ENCODE measurements at regions of chr2 and their contacts with region 1.

Region 1: DNA sequence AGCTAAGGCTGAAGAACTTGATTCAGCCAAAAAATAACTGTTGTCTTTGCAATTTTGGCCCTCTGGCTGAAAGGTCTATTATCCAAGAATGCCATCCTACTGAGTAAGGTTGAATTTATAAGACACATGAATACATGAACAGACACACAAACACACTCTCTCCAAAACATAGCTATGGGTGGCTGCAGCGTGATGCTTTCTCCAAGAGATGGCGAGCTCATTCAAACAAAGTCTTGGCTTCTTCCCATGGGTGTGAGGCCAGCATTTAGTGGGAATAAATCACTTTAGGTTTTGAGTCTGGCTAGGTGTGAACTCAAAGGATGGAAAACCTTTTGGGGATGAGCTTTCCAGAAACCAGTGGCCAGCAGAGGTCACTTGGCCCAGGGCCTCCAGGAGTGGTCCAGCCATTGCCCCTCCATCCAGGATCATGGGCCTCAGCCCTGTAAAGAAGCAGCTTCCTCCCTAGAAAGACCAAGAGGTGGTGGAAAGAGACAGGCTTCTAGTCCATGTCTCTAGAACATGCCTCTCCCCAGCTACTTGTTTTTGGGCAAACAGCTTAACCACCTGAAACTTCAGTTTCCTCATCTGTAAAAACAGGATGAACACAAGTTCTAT is 11.0 kb upstream of the OSR1 start:
- DNase-seq: peak; percentile 51
- H3K4me3 ChIP-seq: no peak overlapping the region
- H3K27ac ChIP-seq: no peak overlapping the region
- H3K4me1 ChIP-seq: no peaks in the 10 kb centered on the region
- H3K27me3 ChIP-seq: no peaks in the 10 kb centered on the region
- CTCF ChIP-seq: peak; percentile 82 to 84

Region 2: GRCh38 chr2:19380532-19380931 is 11.1 kb after region 1 on chr2:
- CTCF ChIA-PET with region 1: no interaction called
- dilution Hi-C with region 1: no loop called
- in situ Hi-C with region 1: no loop called
- intact Hi-C with region 1: no loop called
- DNase-seq: no peak
- H3K4me3 ChIP-seq: no peak overlapping the region
- H3K27ac ChIP-seq: no peak overlapping the region
- H3K4me1 ChIP-seq: no peaks in the 10 kb centered on the region
- H3K27me3 ChIP-seq: no peaks in the 10 kb centered on the region
- CTCF ChIP-seq: no peak

Region 3: DNA sequence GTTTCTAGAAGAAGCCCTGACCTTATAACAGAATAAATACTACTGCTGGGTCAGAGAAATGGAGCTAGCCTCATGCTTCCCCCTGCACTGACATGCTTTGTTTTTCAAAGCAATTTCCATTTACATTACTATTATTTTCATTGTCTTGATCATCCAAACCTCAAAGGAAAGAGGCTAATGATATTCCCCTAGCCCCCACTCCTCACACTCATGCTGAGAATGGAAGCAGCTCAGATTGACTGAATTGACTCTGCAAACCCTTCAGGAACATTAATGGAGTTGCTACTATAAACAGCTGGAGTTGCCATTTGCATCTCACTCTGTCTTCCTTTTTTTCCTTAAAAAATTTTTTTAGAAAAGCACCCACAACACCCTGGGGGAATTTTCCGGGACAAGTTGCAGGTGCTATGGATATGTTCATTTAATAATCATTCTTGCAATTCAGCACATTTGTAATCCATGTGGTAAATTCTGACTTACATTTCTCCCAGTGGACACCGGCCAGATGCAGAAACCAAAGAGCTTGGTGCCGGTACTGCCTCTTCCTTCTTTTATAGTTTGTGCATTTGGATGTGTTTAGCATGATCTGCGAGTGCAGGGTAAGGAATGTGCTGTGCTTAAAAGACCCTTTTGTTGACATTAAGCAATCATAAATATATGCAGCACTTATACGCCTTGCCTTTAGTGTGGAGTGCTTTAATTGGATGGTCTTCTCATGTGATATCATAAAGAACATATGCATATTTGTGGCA is 92.2 kb after region 1 on chr2:
- CTCF ChIA-PET with region 1: no interaction called
- dilution Hi-C with region 1: no loop called
- in situ Hi-C with region 1: no loop called
- intact Hi-C with region 1: no loop called
- DNase-seq: no peak
- H3K4me3 ChIP-seq: no peak overlapping the region
- H3K27ac ChIP-seq: no peak overlapping the region
- H3K4me1 ChIP-seq: no peaks in the 10 kb centered on the region
- H3K27me3 ChIP-seq: no peaks in the 10 kb centered on the region
- CTCF ChIP-seq: no peak

Region 4: DNA sequence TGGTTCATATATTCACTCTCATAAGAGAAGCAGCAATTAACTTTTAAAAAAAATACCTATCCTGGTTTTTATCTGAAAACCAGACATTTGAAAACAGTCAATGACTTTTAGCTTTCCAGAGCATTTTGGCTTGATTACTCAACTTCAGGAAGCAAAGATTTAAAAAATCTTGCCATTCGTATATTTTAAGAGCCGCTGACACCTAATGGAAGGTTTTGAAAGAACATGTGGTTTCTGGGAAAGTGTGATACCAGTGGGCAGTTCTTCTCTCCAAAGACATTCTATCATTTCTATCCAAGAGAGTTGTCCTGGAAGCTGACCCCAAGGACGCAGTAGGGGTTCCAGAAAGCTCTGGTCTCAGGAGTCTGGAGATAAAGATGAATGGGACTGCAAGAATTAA is 297.6 kb after region 1 on chr2:
- CTCF ChIA-PET with region 1: interaction called, 45 read pairs
- dilution Hi-C with region 1: no loop called
- in situ Hi-C with region 1: loop called (anchors 5 kb)
- intact Hi-C with region 1: loop called (anchors 1 kb)
- DNase-seq: peak; percentile 54
- H3K4me3 ChIP-seq: no peak overlapping the region
- H3K27ac ChIP-seq: no peak overlapping the region
- H3K4me1 ChIP-seq: peaks cover 16% of the 10 kb centered on the region
- H3K27me3 ChIP-seq: no peaks in the 10 kb centered on the region
- CTCF ChIP-seq: peak; percentile 28 to 63

Region 5: DNA sequence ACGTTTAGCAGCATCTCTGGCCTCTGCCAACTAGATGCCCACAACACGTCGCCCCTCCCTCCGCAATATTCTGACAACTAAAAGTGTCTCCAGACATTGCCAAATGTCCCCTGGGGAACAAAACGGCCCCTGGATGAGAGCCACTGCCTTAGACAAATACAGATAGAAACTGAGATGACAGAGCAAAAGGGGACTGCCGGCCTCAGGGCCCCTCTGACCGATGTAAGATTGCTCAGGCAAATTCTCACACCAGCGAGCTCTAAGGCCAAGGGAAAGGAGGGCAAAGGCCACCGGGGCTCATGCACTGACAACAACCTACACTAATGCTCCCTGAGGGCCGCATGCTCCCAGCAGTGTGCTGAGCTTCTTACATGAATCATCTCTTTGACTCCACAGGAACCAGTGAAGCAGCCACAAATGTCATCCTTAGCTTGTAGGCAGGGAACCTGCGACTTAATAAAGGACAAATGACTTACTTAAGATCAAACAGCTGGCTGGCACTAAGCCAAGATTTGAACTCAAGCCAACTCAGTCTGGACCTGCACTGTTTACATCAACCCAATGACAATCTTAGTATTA is 303.9 kb after region 1 on chr2:
- CTCF ChIA-PET with region 1: no interaction called
- dilution Hi-C with region 1: no loop called
- in situ Hi-C with region 1: loop called (anchors 5 kb)
- intact Hi-C with region 1: no loop called
- DNase-seq: no peak
- H3K4me3 ChIP-seq: no peak overlapping the region
- H3K27ac ChIP-seq: no peak overlapping the region
- H3K4me1 ChIP-seq: peaks cover 12% of the 10 kb centered on the region
- H3K27me3 ChIP-seq: no peaks in the 10 kb centered on the region
- CTCF ChIP-seq: no peak

Region 6: DNA sequence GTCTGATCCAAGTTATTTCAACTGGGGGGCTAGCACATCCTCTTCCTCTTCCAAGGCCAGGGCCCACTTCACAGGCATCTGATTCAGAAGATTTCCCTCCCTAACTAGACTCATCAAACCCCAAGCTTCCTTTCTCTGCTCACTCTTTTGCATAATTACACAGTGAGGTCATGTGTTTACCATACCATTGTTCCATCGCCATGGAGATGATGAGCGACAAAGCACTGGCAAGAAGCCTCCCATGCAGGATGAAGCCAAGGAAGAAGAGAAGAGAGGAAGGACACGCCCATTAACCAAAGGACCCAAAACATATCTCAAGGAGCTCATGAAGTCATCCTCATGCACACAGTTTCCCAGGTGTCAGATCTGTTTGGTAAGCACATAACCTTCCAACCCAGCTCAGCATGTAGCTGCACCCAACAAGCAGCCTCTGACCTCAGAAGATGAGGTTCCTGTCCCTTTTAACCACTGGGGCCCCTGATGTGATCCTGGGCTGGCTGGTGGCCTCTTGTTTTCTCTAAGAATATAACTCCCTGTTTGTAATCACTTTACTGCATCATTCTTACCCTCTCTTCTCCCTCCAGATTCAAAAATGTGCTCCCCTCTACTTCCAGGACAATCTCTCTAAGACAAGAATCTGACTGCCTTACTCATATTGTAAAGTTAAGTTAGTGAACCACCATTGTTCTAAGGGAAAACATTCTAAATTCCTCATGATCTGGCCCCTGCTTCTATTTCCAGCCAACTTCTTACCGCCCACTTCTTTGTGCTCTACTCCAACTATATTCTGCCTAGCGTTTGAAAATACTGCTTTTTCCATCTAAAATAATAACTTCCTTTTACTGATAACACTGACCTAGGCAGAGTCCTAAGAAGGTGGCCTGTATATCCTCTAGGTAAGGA is 342.3 kb after region 1 on chr2:
- CTCF ChIA-PET with region 1: no interaction called
- dilution Hi-C with region 1: no loop called
- in situ Hi-C with region 1: no loop called
- intact Hi-C with region 1: loop called (anchors 1 kb)
- DNase-seq: peak; percentile 97
- H3K4me3 ChIP-seq: no peak overlapping the region
- H3K27ac ChIP-seq: peak overlapping the region; percentile 72
- H3K4me1 ChIP-seq: peaks cover 10% of the 10 kb centered on the region
- H3K27me3 ChIP-seq: no peaks in the 10 kb centered on the region
- CTCF ChIP-seq: no peak

Region 7: DNA sequence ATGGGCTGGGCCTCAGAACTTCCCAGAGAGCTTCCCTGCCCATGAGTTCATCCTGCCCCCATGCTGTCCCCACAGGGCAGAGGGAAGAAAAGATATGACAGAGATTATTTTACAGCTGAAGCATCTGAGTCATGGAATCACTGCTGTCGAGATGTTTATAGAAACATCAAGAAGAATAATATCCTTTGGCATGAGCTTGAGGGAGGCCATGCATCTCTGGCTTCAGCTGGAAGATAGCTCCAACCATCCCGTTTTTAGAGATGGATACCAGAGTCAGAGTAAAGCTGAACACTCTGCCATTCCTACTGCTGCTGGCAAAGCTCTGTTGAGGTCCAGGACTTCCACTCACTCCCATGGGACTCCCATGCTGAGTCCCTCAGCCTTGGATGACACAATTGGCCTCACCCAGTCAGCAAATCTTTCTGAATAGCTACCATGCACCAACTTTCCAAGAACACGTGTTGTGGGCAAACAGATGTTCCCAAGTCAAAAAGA is 364.5 kb after region 1 on chr2:
- CTCF ChIA-PET with region 1: no interaction called
- dilution Hi-C with region 1: no loop called
- in situ Hi-C with region 1: no loop called
- intact Hi-C with region 1: no loop called
- DNase-seq: no peak
- H3K4me3 ChIP-seq: no peak overlapping the region
- H3K27ac ChIP-seq: no peak overlapping the region
- H3K4me1 ChIP-seq: no peaks in the 10 kb centered on the region
- H3K27me3 ChIP-seq: no peaks in the 10 kb centered on the region
- CTCF ChIP-seq: no peak

Region 8: DNA sequence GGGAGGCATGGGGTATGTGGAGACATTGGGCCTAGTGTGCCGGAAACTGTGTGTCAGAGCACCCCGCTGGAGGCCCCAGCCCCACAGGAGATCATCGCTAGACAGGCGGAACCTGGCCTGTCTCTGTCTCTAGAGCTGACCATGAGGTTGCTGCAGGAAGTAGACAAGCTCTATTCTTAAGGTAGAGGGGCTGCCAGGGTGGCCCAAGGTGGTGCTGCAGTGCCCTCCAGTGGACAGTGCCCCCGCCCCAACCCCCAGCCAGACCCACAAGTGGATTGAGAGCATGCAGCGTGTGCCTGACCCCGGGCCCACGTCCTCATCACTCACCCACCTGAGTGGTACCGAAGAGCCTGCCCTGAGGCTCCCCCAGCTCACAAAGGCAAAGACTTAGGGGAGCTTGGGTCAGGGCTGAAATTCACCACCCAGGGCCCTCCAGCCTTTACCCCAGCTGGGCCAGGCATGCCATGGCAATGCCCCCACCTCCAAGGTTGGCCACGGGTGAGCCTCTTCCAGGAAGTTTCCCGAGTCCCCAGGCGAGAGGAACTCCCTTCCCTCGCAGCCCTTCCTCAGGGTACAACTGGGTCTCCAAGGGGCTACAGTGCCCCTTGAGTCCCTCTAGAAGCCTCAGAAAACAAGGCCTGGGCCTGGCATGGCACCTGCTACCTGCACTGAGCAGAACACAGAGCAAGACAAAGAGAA is 377.3 kb after region 1 on chr2:
- CTCF ChIA-PET with region 1: no interaction called
- dilution Hi-C with region 1: no loop called
- in situ Hi-C with region 1: no loop called
- intact Hi-C with region 1: loop called (anchors 1 kb)
- DNase-seq: no peak
- H3K4me3 ChIP-seq: no peak overlapping the region
- H3K27ac ChIP-seq: no peak overlapping the region
- H3K4me1 ChIP-seq: no peaks in the 10 kb centered on the region
- H3K27me3 ChIP-seq: no peaks in the 10 kb centered on the region
- CTCF ChIP-seq: peak in 1 of 2 donors; percentile 31

Region 9: GRCh38 chr2:19855542-19856431 is 486.3 kb after region 1 on chr2:
- CTCF ChIA-PET with region 1: no interaction called
- dilution Hi-C with region 1: loop called (anchors 5 kb)
- in situ Hi-C with region 1: loop called (anchors 5 kb)
- intact Hi-C with region 1: no loop called
- DNase-seq: no peak
- H3K4me3 ChIP-seq: no peak overlapping the region
- H3K27ac ChIP-seq: no peak overlapping the region
- H3K4me1 ChIP-seq: peaks cover 22% of the 10 kb centered on the region
- H3K27me3 ChIP-seq: no peaks in the 10 kb centered on the region
- CTCF ChIP-seq: no peak